ENCODE measurements at regions of chr2 and their contacts with region 1.

Region 1: DNA sequence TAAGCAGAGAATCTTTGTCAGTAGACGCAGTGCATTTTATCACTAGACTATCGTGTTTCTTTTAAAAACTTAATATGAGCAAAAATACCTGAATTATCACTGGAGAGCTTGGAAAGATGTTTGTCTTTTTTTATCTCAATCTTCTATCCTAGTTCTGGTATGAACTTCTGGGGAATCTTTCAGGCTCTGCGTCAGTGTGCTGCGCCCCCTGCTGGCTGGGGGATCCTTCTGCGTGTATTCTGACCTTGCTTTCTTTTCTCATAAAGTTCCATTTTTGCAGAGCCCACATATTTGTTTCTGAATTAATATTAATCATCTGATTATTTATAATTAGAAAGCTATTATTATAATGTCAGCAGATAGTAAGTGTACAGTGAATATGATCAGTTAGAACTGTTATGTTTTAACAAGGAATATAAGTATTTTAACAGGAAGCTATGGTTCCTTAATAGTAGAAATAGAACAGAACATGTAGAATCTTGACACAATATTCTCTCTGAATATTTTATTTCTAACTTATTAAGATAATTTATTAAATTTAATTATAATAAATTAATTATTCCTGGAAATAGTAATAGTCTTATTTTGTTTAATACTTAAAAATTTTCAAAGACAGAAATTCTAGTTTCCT is 945.0 kb upstream of the CRIM1 start:
- DNase-seq: peak; percentile 32 to 47
- ATAC-seq: no peak
- H3K4me3 ChIP-seq: no peak overlapping the region
- H3K27ac ChIP-seq: no peak overlapping the region
- H3K4me1 ChIP-seq: no peaks in the 10 kb centered on the region
- H3K27me3 ChIP-seq: no peaks in the 10 kb centered on the region
- CTCF ChIP-seq: peak; percentile 53 to 93 (median 87)

Region 2: DNA sequence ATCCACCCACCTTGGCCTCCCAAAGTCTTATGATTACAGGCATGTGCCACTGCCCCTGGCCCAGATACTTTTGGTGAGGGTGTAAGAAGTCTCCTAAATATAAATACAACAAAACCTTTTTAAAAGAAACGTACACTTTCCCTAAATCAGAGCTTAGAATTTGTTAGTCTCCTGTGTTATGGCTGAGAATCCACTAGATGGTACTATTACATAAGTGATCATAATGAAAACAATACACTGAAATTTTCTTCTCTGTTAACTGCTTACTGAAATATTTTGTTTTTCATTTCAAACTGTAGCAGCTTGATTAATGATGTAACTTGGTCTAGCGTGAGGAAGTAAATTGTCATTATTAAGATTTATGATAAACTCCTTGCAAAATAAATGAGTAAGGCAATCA is 1736.6 kb before region 1 on chr2:
- intact Hi-C with region 1: loop called in 7 of 10 experiments (anchors 2 to 10 kb)
- DNase-seq: no peak
- ATAC-seq: no peak
- H3K4me3 ChIP-seq: no peak overlapping the region
- H3K27ac ChIP-seq: no peak overlapping the region
- H3K4me1 ChIP-seq: no peaks in the 10 kb centered on the region
- H3K27me3 ChIP-seq: no peaks in the 10 kb centered on the region
- CTCF ChIP-seq: peak; percentile 19 to 71 (median 46)

Region 3: GRCh38 chr2:34012715-34013302 is 1397.7 kb before region 1 on chr2:
- intact Hi-C with region 1: loop called in 2 of 10 experiments (anchors 5 to 10 kb)
- DNase-seq: peak; percentile 35
- ATAC-seq: peak in 3 of 8 donors; percentile 66 to 76 (median 71)
- H3K4me3 ChIP-seq: no peak overlapping the region
- H3K27ac ChIP-seq: no peak overlapping the region
- H3K4me1 ChIP-seq: no peaks in the 10 kb centered on the region
- H3K27me3 ChIP-seq: no peaks in the 10 kb centered on the region
- CTCF ChIP-seq: peak; percentile 30 to 74 (median 65)

Region 4: GRCh38 chr2:34096562-34097171 is 1313.9 kb before region 1 on chr2:
- intact Hi-C with region 1: loop called (anchors 2 to 10 kb)
- DNase-seq: peak in 1 of 2 donors; percentile 41
- ATAC-seq: peak in 4 of 8 donors; percentile 39 to 59 (median 46)
- H3K4me3 ChIP-seq: no peak overlapping the region
- H3K27ac ChIP-seq: no peak overlapping the region
- H3K4me1 ChIP-seq: no peaks in the 10 kb centered on the region
- H3K27me3 ChIP-seq: no peaks in the 10 kb centered on the region
- CTCF ChIP-seq: peak; percentile 61 to 89 (median 76)

Measured in heart right ventricle (tissue), 16 donors.